GM10248 (cell line): ENCODE measurements at regions of chr6 and their contacts with region 1.

Region 1: DNA sequence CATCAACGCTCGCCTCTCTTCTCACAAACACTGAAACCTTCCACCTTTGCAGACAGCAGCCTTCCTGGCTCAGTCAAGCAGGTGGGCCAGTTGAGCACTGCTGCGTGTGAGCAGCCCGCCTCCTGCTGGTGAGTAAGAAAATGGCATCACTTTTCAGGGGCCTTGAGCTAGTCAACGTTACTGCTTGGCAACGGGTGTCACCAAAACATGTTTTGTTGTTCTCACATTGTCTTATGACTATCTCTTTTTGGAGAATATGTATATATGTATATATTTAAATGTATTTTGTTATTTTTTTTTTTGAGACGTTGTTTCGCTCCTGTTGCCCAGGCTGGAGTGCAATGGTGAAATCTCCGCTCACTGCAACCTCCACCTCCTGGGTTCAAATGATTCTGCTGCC is 97.0 kb upstream of the AGPAT4 start:
- DNase-seq: peak; percentile 79
- CTCF ChIP-seq: peak; percentile 90

Region 2: GRCh38 chr6:160750276-160750689 is 620.6 kb before region 1 on chr6:
- CTCF ChIA-PET with region 1: interaction called, 56 read pairs
- POLR2A ChIA-PET with region 1: no interaction called
- DNase-seq: peak; percentile 35
- CTCF ChIP-seq: peak; percentile 48

Region 3: DNA sequence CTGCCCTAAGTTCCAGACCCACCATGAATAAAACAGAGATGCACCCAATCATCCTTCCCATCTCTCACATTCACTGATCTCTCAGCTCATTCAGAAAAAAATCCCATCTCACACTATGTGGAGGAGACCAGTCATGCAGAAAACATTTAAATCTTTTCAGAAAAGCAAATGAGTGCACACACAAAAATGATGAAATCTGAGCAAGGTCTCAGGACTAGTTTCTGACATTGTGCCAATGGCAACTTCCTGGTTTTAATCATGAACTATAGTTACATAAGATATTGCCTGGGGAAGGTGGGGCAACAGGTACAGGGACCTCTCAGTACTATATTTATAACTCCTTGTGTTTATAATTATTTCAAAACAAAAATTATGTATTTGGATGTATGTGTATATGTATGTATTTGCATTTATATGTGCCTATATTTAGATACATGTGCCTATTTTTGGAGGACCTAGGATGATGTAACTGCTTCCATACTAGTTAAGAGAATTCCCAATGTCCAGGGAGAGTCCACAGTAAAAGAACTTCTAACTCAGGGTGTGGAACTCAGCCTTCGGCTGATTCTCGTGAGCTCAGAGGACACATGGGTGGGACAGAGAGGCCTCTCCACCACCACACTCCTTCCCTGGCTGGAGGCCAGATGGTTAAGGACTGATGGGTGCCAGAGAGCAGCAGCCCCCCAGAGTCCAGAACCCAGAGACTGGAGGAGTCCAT is 451.0 kb before region 1 on chr6:
- CTCF ChIA-PET with region 1: interaction called, 15 read pairs
- POLR2A ChIA-PET with region 1: no interaction called
- DNase-seq: no peak
- CTCF ChIP-seq: no peak

Region 4: DNA sequence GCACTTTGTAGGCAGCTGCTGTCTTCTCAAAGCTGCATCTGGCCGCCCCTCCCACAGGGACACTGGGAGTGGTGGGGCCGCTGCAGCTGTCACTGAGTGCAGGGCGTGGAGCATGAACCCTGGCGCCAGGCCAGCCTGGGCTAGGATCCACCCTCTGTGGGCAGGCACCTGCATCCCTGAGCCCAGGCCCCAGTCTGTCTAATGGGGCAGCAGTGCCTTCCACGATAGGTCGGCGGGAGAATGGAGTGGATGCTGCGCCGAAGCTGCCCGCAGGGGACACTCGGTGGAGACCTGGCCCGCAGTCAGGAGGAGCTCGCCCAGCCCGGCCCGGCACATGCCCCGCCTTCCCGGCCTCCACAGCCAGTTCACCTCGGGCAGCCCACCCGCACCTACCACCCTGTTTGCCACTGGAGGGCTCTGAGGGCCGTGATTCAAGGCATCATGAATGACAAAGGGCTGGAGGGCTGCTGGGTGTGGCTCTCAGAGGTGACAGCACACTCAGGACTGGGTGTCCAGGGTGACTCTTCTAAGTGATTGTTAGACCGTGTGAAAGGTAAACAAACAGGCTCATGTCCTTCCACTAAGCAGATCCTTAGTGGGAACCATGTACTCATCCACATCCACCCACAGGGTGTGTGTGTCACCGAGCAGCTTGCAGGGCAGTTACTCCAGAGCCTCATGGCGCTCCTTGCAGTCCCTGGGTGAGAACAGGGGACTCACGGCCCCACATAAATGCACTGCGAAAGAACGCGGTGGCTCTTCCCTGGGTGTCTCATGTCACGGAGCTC is 230.9 kb before region 1 on chr6:
- CTCF ChIA-PET with region 1: interaction called, 112 read pairs
- POLR2A ChIA-PET with region 1: no interaction called
- DNase-seq: no peak
- CTCF ChIP-seq: peak; percentile 35

Region 5: DNA sequence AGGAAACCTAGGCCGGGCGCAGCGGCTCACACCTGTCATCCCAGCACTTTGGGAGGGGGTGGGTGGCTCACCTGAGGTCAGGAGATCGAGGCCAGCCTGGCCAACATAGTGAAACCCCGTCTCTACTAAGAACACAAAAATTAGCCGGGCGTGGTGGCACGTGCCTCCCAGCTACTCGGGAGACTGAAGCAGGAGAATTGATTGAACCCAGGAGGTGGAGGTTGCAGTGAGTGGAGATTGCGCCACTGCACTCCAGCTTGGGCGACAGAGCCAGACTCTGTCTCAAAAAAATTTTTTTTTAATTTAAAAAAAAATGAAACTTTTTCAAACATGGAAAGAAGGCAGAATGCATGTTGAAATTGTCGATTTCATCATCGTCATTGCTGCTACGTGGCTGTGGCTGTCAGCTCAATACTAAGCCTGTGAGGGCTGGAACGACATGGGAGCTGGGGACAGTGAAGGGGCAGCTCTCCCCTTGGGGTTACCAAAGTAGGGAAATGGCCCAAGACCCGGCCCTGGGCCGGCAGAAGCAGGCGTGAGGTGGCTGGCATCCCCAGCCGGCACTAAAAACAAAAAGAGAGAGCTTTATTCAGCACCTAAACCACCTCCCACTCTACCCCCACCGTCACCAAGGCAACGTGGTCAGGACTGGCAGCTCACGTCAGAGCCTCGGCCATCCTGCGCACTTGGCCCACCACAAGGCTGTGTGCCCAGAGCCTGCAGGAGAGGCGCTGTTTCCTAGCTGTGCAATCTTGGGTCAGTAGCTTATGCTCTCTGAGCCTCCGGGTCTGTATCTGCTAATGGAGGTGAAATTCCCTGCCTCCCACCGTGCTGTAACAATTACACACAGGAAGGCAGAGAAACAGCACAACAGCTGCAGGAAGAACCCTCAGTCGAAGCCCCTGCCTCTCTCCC is 127.8 kb before region 1 on chr6:
- CTCF ChIA-PET with region 1: no interaction called
- POLR2A ChIA-PET with region 1: no interaction called
- DNase-seq: no peak
- CTCF ChIP-seq: no peak

Region 6: DNA sequence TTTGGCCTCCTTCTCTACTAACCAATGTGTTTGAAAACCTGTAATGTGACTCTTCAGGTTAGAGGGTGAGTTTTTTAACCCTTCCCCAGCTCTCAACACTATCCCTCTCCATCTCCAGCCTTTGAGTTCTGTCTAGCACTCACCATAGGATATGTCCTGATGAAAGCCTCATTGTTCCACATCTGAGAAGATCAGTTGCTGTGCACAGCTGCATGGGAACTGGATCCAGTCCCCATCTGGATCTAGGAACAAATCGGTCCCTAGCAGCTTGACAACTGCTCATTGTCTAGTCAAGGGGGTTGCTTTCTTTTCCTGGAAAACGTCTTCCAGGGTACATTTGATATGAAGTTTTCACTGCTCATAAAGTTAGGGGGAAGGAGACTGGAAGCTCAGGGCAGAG is 51.6 kb before region 1 on chr6:
- CTCF ChIA-PET with region 1: no interaction called
- POLR2A ChIA-PET with region 1: no interaction called
- DNase-seq: no peak
- CTCF ChIP-seq: no peak

Region 7: GRCh38 chr6:161356167-161356854 is 14.6 kb before region 1 on chr6:
- CTCF ChIA-PET with region 1: interaction called, 25 read pairs
- POLR2A ChIA-PET with region 1: no interaction called
- DNase-seq: no peak
- CTCF ChIP-seq: no peak